Activated CD4-positive, alpha-beta T cell treated with anti-CD3 and anti-CD28 coated beads for 36 hours (primary cell): ENCODE measurements at regions of chr12 and their contacts with region 1.

Region 1: DNA sequence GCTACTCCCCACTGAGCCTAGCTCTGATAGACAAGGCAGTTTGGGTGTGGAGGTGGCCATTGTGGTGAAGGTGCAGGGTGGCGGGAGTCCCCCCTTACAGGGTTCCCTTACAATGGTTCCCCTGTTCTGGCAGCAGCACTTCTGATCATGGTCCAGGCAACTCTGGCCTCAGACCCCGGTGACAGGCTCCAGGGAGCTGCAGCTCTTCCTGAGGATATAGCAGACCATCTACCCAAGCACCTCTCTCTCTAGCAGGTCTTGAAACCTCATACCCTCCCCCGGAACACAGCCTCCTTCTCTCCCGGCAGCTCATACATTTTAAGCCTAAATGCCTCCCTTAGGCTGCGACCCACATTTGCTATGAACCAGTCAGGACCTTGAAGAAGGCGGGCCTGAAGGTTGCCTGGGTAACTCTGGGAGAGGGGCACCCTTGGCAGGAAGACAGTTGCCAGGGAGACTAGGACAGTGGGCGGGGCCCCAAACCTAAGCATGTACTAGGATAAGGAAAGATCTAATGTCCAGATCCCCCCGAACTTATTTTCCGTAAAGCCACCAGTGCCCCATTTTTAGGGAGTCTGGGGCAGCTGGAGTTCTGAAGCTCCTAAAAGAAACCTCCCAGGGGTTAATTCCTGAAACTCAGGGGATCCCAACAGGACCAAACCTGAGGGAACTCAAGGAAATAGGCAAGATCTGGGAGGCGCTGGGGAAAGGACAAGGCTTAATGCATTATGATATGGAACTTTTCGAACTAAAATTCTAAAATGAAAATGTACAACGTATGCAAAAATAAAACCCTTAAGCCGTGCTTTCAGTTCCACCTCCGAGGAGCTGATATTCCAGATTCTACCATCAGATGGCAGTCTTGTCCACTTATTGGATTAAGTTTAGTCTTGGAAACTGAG is 4.5 kb upstream of the GDF11 start:
- DNase-seq: peak; percentile 88
- ATAC-seq: peak; percentile 82
- H3K4me3 Mint-ChIP-seq: peak overlapping the region; percentile 68
- H3K27ac Mint-ChIP-seq: peak overlapping the region; percentile 76
- H3K4me1 Mint-ChIP-seq: peaks cover 23% of the 10 kb centered on the region
- H3K27me3 Mint-ChIP-seq: no peaks in the 10 kb centered on the region

Region 2: DNA sequence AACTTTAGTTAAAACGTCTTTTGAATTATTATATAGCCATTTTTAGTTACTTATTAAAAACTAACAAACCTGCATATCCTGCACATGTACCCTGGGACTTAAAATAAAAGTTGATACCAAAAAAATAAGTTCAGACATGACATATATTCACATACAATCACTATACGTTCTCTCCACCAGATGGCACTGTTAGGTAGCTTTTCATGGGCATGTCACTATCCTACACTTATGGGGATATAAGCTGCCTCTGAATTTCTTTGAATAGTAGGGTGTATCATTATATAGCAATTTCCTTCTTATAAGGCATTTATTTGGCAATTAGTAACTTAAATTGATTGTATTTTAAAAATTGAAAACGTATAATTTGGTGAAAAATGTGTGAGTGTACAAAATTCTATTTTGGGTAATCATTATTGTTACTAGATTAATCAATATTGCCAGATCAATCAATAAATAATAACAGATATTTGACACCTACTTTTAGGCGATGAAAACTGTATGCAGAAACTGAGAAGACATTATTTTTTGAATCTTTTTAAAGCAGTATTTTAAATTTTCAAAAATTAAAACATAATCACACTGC is 549.3 kb before region 1 on chr12:
- CTCF ChIA-PET with region 1: interaction called, 3 read pairs
- POLR2A ChIA-PET with region 1: no interaction called
- intact Hi-C with region 1: loop called in 1 of 2 experiments (anchors 1 kb)
- DNase-seq: peak; percentile 59
- ATAC-seq: peak; percentile 81
- H3K4me3 Mint-ChIP-seq: no peak overlapping the region
- H3K27ac Mint-ChIP-seq: no peak overlapping the region
- H3K4me1 Mint-ChIP-seq: no peaks in the 10 kb centered on the region
- H3K27me3 Mint-ChIP-seq: peaks cover 32% of the 10 kb centered on the region

Region 3: DNA sequence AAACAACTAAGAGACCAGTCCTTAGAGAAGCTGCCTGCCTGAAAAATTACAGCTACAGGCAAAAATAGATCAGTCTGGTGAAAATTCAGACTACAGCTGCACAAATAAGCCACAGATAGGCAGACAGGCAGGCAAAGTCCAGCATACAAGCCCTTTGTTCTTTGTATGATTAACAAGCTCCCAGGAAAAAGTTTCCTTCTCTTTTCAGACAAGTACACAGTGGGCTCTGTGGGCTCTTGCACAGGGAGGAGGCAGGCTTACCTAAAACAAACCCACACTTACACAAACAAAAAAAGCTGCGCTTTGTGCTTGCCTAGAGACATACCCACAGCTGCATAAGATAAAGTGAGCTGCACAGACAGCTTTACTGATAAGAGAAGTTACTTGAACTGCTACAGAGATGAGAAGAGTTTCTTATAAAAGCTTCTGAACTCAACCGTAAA is 238.5 kb before region 1 on chr12:
- CTCF ChIA-PET with region 1: no interaction called
- POLR2A ChIA-PET with region 1: no interaction called
- intact Hi-C with region 1: no loop called
- DNase-seq: no peak
- ATAC-seq: no peak
- H3K4me3 Mint-ChIP-seq: no peak overlapping the region
- H3K27ac Mint-ChIP-seq: no peak overlapping the region
- H3K4me1 Mint-ChIP-seq: no peaks in the 10 kb centered on the region
- H3K27me3 Mint-ChIP-seq: peaks cover 9% of the 10 kb centered on the region

Region 4: GRCh38 chr12:55629058-55629841 is 109.1 kb before region 1 on chr12:
- CTCF ChIA-PET with region 1: no interaction called
- POLR2A ChIA-PET with region 1: no interaction called
- intact Hi-C with region 1: no loop called
- DNase-seq: peak; percentile 47
- ATAC-seq: peak; percentile 78
- H3K4me3 Mint-ChIP-seq: peak overlapping the region; percentile 7
- H3K27ac Mint-ChIP-seq: peak overlapping the region; percentile 57
- H3K4me1 Mint-ChIP-seq: peaks cover 21% of the 10 kb centered on the region
- H3K27me3 Mint-ChIP-seq: peaks cover 24% of the 10 kb centered on the region

Region 5: DNA sequence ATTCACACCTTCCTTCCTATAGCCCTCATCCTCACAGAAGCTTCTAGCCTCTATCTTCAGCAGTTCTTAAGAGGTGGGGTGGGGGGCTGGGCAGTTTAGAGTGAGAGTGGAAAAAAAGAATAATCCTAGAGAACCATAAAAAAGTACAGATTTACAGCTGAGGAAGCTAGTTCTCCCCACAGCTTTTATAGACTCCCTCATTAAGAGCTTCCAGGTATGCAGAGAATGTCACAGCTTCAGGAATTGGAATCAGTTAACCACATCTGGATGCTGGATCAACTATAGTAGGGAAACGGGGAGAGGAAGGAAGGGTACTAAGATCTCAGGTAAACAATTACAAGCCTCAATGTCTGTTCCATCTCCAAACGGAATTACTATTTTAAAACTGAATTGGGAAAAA is 16.9 kb after region 1 on chr12:
- CTCF ChIA-PET with region 1: interaction called, 19 read pairs
- POLR2A ChIA-PET with region 1: no interaction called
- intact Hi-C with region 1: no loop called
- DNase-seq: no peak
- ATAC-seq: no peak
- H3K4me3 Mint-ChIP-seq: no peak overlapping the region
- H3K27ac Mint-ChIP-seq: peak overlapping the region; percentile 55
- H3K4me1 Mint-ChIP-seq: peaks cover 12% of the 10 kb centered on the region
- H3K27me3 Mint-ChIP-seq: no peaks in the 10 kb centered on the region

Region 6: GRCh38 chr12:55829967-55830600 is 91.7 kb after region 1 on chr12:
- CTCF ChIA-PET with region 1: interaction called, 20 read pairs
- POLR2A ChIA-PET with region 1: no interaction called
- intact Hi-C with region 1: no loop called
- DNase-seq: peak; percentile 52
- ATAC-seq: peak; percentile 37
- H3K4me3 Mint-ChIP-seq: peak overlapping the region; percentile 99
- H3K27ac Mint-ChIP-seq: peak overlapping the region; percentile 97
- H3K4me1 Mint-ChIP-seq: peaks cover 46% of the 10 kb centered on the region
- H3K27me3 Mint-ChIP-seq: no peaks in the 10 kb centered on the region

Region 7: GRCh38 chr12:55966408-55967281 is 228.3 kb after region 1 on chr12 and contains the start of gene CDK2:
- CTCF ChIA-PET with region 1: interaction called, 13 read pairs
- POLR2A ChIA-PET with region 1: interaction called, 3 read pairs
- intact Hi-C with region 1: no loop called
- DNase-seq: peak; percentile 94
- ATAC-seq: peak; percentile 98
- H3K4me3 Mint-ChIP-seq: peak within 1 kb of the TSS; percentile 99
- H3K27ac Mint-ChIP-seq: peak within 1 kb of the TSS; percentile 94
- H3K4me1 Mint-ChIP-seq: peaks cover 30% of the 10 kb centered on the region
- H3K27me3 Mint-ChIP-seq: no peaks in the 10 kb centered on the region
- total RNA-seq, gene CDK2: 104 to 149 TPM

Region 8: GRCh38 chr12:56041552-56042429 is 303.4 kb after region 1 on chr12 and contains the start of gene RPS26:
- CTCF ChIA-PET with region 1: interaction called, 16 read pairs
- POLR2A ChIA-PET with region 1: interaction called, 4 read pairs
- intact Hi-C with region 1: loop called (anchors 1 to 5 kb)
- DNase-seq: peak; percentile 97
- ATAC-seq: peak; percentile 92
- H3K4me3 Mint-ChIP-seq: peak within 1 kb of the TSS; percentile 91
- H3K27ac Mint-ChIP-seq: peak within 1 kb of the TSS; percentile 99
- H3K4me1 Mint-ChIP-seq: peaks cover 61% of the 10 kb centered on the region
- H3K27me3 Mint-ChIP-seq: no peaks in the 10 kb centered on the region
- total RNA-seq, gene RPS26: 33.9 to 64.0 TPM

Region 9: DNA sequence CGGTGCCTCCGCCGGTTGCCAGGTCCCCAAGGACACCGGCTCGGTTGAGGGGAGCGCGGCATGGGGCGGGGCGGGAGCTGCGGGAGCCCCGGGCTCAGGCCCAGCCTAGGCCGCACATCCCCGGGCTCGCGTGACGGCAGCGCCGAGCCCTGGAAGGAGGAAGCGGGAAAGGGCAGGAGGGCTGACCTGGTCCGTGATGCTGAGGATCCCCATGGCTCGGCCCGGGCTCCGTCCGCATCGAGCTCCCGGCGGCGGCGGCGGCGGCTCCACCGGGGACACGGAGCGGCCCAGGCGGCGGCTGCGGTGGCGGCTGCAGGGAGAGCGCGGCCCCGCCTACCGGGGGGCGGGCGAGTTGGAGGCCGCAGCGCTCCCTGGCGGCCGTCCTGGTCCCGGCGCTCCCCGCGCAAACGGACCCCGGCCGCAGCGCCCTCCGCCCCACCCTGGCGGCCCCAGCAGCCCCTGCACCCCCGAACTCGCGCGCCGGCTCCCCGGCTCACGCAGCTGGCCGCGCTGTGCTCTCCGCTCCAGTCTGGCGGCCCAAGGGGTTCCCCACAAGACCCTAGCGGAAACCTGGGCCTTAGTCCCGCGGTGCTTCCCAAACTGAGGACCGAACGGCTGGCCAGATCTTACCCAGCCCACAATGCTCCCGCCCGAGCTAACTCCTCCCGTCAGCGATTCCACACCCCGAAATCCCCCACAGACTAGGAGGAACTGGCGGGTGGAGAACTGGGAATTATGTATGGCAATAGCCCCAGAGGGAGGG is 519.9 kb after region 1 on chr12 and contains the start of gene ANKRD52:
- CTCF ChIA-PET with region 1: no interaction called
- POLR2A ChIA-PET with region 1: no interaction called
- intact Hi-C with region 1: loop called in 1 of 2 experiments (anchors 10 kb)
- DNase-seq: peak; percentile 90
- ATAC-seq: peak; percentile 92
- H3K4me3 Mint-ChIP-seq: peak within 1 kb of the TSS; percentile 83
- H3K27ac Mint-ChIP-seq: peak within 1 kb of the TSS; percentile 72
- H3K4me1 Mint-ChIP-seq: peaks cover 16% of the 10 kb centered on the region
- H3K27me3 Mint-ChIP-seq: no peaks in the 10 kb centered on the region
- total RNA-seq, gene ANKRD52: 29.2 to 31.0 TPM